ENCODE measurements at regions of chr3 and their contacts with region 1.

Region 1: GRCh38 chr3:136852180-136852579 is 9.8 kb upstream of the NCK1 start:
- DNase-seq: no peak
- ATAC-seq: peak in 1 of 2 donors; percentile 52
- H3K4me3 ChIP-seq: no peak overlapping the region
- H3K27ac ChIP-seq: peak overlapping the region; percentile 24 to 67 (median 36)
- H3K4me1 ChIP-seq: peaks cover 0 to 7% of the 10 kb centered on the region in 2 donors
- H3K27me3 ChIP-seq: no peaks in the 10 kb centered on the region
- CTCF ChIP-seq: no peak
- POLR2A ChIP-seq: no peak

Region 2: GRCh38 chr3:136787349-136787748 is 64.8 kb before region 1 on chr3:
- in situ Hi-C with region 1: no loop called
- intact Hi-C with region 1: loop called (anchors 1 kb)
- DNase-seq: peak; percentile 32 to 50
- ATAC-seq: peak; percentile 85 to 92
- H3K4me3 ChIP-seq: no peak overlapping the region
- H3K27ac ChIP-seq: peak overlapping the region; percentile 3 to 58 (median 46)
- H3K4me1 ChIP-seq: peaks cover 15 to 17% of the 10 kb centered on the region in 2 donors
- H3K27me3 ChIP-seq: no peaks in the 10 kb centered on the region
- CTCF ChIP-seq: no peak
- POLR2A ChIP-seq: no peak